ENCODE measurements at regions of chr1 and their contacts with region 1.

Region 1: GRCh38 chr1:27145934-27146354 is 9.0 kb downstream of the SLC9A1 start:
- DNase-seq: peak; percentile 67
- H3K4me3 ChIP-seq: no peak overlapping the region
- H3K27me3 ChIP-seq: no peaks in the 10 kb centered on the region
- CTCF ChIP-seq: no peak

Region 2: DNA sequence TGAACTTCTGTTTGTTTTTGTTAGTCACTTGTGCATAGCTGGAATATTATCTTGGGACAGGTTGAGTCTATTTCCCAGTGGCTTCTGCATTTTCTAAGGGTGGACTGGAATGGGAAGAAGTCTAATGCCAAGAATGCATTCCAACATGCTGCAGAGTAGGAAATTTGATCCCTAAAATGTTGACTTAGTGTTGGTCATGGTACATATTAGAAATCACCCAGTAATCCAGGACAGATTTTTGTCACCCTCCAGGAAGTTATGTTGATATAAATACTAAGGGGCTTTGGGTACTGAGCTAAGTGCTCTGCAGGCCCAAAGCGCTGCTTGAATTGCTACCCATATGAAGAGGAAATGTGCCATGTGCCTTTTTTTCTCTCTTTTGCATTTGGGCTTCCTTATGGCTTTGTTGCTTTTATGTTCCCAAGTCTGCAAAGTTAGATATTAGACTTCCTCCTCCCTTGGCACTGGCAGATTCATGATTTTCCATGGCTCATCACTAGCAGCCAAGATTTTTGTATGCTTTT is 440.1 kb before region 1 on chr1:
- CTCF ChIA-PET with region 1: no interaction called
- POLR2A ChIA-PET with region 1: no interaction called
- DNase-seq: peak; percentile 90
- H3K4me3 ChIP-seq: no peak overlapping the region
- H3K27me3 ChIP-seq: no peaks in the 10 kb centered on the region
- CTCF ChIP-seq: no peak

Region 3: GRCh38 chr1:27095576-27095975 is 50.4 kb before region 1 on chr1:
- CTCF ChIA-PET with region 1: no interaction called
- POLR2A ChIA-PET with region 1: no interaction called
- DNase-seq: no peak
- H3K4me3 ChIP-seq: no peak overlapping the region
- H3K27me3 ChIP-seq: no peaks in the 10 kb centered on the region
- CTCF ChIP-seq: no peak

Region 4: DNA sequence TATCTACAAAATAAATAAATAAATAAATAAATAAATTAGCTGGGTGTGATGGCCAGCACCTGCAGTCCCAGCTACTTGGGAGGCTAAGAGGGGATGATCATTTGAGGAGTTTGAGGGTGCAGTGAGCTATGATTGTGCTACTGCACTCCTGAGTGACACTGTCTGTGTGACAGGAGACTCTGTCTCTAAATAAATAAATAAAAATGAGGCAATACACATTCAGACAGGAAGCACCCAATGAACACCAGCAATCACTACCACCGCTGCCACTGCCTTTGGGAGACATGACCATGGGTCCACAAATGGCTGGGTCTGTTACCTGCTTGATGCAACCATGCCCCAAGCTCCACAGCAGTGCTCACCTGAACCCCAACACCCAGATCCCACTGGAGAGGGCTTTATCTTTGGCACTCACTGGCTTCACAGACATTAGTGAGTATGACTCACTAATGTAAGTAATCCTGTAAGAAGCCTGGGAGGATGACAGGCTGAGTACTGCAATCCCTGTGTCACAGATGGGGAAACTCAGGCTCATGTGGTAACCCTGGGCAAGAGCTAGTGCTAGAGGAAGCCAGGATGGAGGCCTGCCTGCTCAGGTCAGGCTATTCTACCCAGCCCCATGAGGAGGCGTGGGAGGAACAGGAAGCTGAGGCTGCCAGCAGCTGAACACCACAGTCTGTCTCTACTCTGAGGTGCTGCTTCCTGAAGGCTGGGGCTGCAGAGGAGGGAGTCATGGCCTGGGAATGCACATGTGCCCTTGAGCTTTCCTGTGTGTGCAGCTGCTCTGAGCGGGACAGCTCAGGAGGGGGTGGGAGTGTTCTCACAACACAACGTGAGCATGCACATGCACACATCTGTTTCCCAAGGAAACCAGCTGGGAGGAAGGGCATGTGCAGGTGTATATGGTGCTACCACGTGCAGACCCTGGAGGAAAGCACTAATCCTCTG is 34.0 kb before region 1 on chr1:
- CTCF ChIA-PET with region 1: interaction called, 11 read pairs
- POLR2A ChIA-PET with region 1: no interaction called
- DNase-seq: peak; percentile 99
- H3K4me3 ChIP-seq: no peak overlapping the region
- H3K27me3 ChIP-seq: no peaks in the 10 kb centered on the region
- CTCF ChIP-seq: peak; percentile 65

Region 5: GRCh38 chr1:27176323-27176722 is 30.4 kb after region 1 on chr1:
- CTCF ChIA-PET with region 1: no interaction called
- POLR2A ChIA-PET with region 1: no interaction called
- DNase-seq: no peak
- H3K4me3 ChIP-seq: no peak overlapping the region
- H3K27me3 ChIP-seq: 0 out of 2 replicates have a peak, but pooled peaks cover 2% of the 10 kb centered on the region
- CTCF ChIP-seq: no peak

Measured in BJ (cell line).